ENCODE measurements at regions of chr16 and their contacts with region 1.

Region 1: DNA sequence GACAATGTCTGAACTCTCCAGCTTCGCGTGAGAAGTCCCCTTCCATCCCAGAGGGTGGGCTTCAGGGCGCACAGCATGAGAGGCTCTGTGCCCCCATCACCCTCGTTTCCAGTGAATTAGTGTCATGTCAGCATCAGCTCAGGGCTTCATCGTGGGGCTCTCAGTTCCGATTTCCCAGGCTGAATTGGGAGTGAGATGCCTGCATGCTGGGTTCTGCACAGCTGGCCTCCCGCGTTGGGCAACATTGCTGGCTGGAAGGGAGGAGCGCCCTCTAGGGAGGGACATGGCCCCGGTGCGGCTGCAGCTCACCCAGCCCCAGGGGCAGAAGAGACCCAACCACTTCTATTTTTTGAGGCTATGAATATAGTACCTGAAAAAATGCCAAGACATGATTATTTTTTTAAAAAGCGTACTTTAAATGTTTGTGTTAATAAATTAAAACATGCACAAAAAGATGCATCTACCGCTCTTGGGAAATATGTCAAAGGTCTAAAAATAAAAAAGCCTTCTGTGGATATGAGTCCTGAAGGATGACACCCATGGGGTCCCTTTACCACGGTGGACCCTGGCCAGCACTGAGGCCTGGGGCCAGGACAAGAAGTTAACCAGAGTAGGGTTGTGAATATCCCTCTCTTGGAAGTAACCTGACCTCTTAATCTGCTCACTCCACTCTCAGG is 10.5 kb upstream of the ITGAD start:
- DNase-seq: peak; percentile 71 to 82 (median 72)
- ATAC-seq: peak; percentile 96
- H3K4me3 ChIP-seq: no peak overlapping the region
- H3K27ac ChIP-seq: no peak overlapping the region
- H3K4me1 ChIP-seq: peaks cover 0 to 5% of the 10 kb centered on the region in 2 experiments; a peak in 2 of 5 replicates
- H3K27me3 ChIP-seq: peaks cover 3 to 34% of the 10 kb centered on the region in 2 experiments; a peak in 4 of 5 replicates
- CTCF ChIP-seq: peak; percentile 82 to 90 (median 86)
- EP300 ChIP-seq: no peak
- POLR2A ChIP-seq: no peak
- RAD21 ChIP-seq: peak; percentile 56 to 83

Region 2: DNA sequence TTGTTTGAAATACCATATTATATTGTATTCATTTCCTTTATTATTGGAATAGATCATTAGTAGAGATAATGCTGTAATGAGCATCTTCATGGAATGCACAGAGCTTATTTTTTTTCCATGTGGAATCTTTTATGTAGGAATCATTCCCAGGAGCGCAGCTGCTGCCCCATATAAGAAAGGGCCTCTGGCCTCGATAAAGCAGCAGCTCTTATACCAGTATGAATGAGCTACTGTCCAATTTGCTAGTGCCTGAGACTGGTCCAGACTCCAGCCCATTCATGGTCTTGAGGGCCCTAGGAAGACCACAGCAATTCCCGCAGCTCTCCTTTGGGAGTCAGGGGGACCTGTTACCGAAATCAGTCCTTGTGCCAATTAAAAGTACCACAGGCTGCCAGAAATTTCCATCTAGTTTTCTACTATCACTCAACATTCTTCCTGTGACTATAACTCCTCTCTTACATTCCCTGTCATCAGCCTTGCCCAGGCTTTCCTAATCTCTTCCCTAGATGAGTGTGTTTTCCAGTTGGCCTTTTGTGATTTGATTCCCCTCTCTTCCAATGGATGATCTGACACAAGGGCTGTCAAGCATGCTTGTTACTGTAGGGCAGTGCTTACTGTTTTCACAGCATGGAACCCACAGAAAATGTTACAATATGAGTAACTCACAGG is 58.0 kb after region 1 on chr16:
- CTCF ChIA-PET with region 1: no interaction called
- POLR2A ChIA-PET with region 1: no interaction called
- in situ Hi-C with region 1: no loop called
- intact Hi-C with region 1: loop called (anchors 10 kb)
- DNase-seq: no peak
- ATAC-seq: no peak
- H3K4me3 ChIP-seq: no peak overlapping the region
- H3K27ac ChIP-seq: no peak overlapping the region
- H3K4me1 ChIP-seq: peaks cover 3 to 25% of the 10 kb centered on the region in 2 experiments; a peak in 2 of 5 replicates
- H3K27me3 ChIP-seq: no peaks in the 10 kb centered on the region; a peak in 1 of 5 replicates
- CTCF ChIP-seq: no peak
- EP300 ChIP-seq: no peak
- POLR2A ChIP-seq: no peak
- RAD21 ChIP-seq: no peak

Region 3: DNA sequence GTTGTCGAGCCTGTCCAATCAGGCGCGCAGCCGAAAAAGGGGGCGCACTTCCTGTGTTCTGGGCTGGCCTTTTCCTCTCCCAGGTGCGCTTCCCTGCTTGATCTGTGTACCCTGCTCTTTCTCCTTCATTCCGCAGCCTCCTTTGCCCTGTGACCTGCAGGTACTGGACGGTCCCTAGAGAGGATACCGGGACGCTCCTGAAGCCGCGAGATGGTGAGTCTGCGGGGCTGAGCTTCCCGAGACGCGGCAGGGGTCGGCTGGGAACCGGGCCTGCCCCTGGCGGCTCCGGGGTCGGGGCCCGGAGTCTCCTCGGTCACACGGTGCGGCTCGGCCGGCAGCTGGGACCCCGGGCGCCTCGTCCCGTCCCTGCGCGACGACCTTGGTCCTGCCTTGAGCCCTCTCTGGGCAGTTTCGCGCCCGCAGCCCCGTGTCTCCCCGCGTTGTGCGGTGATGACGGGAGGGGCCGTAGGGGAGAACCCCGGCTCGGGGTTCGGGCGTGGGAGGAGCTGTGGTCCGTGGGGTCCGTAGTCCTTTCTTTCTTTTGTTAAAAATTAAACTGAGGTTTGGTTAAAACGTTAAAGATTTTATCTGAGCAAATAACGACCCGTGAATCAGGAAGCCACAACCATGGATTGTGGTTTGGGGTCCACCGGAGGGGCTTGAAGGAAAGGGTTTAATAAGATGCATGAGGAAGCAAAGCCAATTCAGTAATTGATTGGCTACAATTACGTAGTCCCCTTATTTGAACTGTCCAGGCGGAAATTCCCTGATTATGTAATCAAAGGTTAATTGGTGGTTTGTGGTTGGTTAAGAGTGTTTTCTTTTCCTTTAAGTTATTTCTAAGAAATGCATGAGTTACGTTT is 318.1 kb after region 1 on chr16:
- CTCF ChIA-PET with region 1: interaction called, 3 read pairs
- POLR2A ChIA-PET with region 1: no interaction called
- in situ Hi-C with region 1: loop called (anchors 10 kb)
- intact Hi-C with region 1: loop called (anchors 10 kb)
- DNase-seq: peak in 3 of 4 experiments; percentile 39 to 93 (median 56)
- ATAC-seq: peak; percentile 71
- H3K4me3 ChIP-seq: peak overlapping the region; percentile 84
- H3K27ac ChIP-seq: peak overlapping the region; percentile 66
- H3K4me1 ChIP-seq: peaks cover 5 to 8% of the 10 kb centered on the region in 2 experiments; a peak in 3 of 5 replicates
- H3K27me3 ChIP-seq: no peaks in the 10 kb centered on the region
- CTCF ChIP-seq: 0 out of 6 replicates have a peak, but pooled peaks of 1 of the 3 experiments have one; percentile 19
- EP300 ChIP-seq: no peak
- POLR2A ChIP-seq: peak; percentile 79
- RAD21 ChIP-seq: no peak

Region 4: GRCh38 chr16:31873556-31874365 is 491.1 kb after region 1 on chr16 and contains the start of gene ZNF267:
- CTCF ChIA-PET with region 1: no interaction called
- POLR2A ChIA-PET with region 1: no interaction called
- in situ Hi-C with region 1: no loop called
- intact Hi-C with region 1: loop called (anchors 10 kb)
- DNase-seq: peak; percentile 95 to 98 (median 98)
- ATAC-seq: peak; percentile 93
- H3K4me3 ChIP-seq: peak within 1 kb of the TSS; percentile 98
- H3K27ac ChIP-seq: peak within 1 kb of the TSS; percentile 98
- H3K4me1 ChIP-seq: peaks cover 10 to 37% of the 10 kb centered on the region in 2 experiments
- H3K27me3 ChIP-seq: no peaks in the 10 kb centered on the region
- CTCF ChIP-seq: no peak
- EP300 ChIP-seq: no peak
- POLR2A ChIP-seq: peak; percentile 96
- RAD21 ChIP-seq: no peak
- polyA plus RNA-seq, gene ZNF267: 18.1 to 22.2 TPM